PC-9 (cell line): ENCODE measurements at regions of chr12 and their contacts with region 1.

Region 1: GRCh38 chr12:106941481-106942156 is 14.1 kb upstream of the TMEM263 start:
- DNase-seq: no peak
- H3K4me3 ChIP-seq: no peak overlapping the region
- H3K27ac ChIP-seq: no peak overlapping the region
- H3K4me1 ChIP-seq: no peaks in the 10 kb centered on the region
- H3K27me3 ChIP-seq: no peaks in the 10 kb centered on the region
- CTCF ChIP-seq: no peak

Region 2: DNA sequence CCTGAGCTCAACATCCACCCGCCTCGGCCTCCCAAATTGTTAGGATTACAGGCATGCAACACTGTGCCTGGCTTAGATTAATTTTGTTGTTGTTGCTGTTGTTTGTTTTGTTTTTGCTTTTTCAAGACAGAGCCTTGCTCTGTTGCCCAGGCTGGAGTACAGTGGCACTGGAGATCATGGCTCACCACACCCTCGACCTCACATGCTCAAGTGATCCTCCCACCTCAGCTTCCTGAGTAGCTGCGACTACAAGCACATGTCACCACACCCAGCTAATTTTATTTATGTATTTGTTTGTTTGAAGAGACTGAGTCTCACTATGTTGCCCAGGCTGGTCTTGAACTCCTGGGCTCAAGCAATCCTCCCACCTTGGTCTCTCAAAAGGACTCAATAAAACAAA is 125.1 kb after region 1 on chr12:
- CTCF ChIA-PET with region 1: no interaction called
- POLR2A ChIA-PET with region 1: interaction called, 10 read pairs
- intact Hi-C with region 1: no loop called
- DNase-seq: no peak
- H3K4me3 ChIP-seq: no peak overlapping the region
- H3K27ac ChIP-seq: no peak overlapping the region
- H3K4me1 ChIP-seq: no peaks in the 10 kb centered on the region
- H3K27me3 ChIP-seq: no peaks in the 10 kb centered on the region
- CTCF ChIP-seq: no peak

Region 3: GRCh38 chr12:107179871-107180270 is 238.3 kb after region 1 on chr12:
- CTCF ChIA-PET with region 1: no interaction called
- POLR2A ChIA-PET with region 1: no interaction called
- intact Hi-C with region 1: no loop called
- DNase-seq: no peak
- H3K4me3 ChIP-seq: no peak overlapping the region
- H3K27ac ChIP-seq: no peak overlapping the region
- H3K4me1 ChIP-seq: no peaks in the 10 kb centered on the region
- H3K27me3 ChIP-seq: no peaks in the 10 kb centered on the region
- CTCF ChIP-seq: no peak